Left colon (tissue), 2 donors: ENCODE measurements at regions of chrX and their contacts with region 1.

Region 1: DNA sequence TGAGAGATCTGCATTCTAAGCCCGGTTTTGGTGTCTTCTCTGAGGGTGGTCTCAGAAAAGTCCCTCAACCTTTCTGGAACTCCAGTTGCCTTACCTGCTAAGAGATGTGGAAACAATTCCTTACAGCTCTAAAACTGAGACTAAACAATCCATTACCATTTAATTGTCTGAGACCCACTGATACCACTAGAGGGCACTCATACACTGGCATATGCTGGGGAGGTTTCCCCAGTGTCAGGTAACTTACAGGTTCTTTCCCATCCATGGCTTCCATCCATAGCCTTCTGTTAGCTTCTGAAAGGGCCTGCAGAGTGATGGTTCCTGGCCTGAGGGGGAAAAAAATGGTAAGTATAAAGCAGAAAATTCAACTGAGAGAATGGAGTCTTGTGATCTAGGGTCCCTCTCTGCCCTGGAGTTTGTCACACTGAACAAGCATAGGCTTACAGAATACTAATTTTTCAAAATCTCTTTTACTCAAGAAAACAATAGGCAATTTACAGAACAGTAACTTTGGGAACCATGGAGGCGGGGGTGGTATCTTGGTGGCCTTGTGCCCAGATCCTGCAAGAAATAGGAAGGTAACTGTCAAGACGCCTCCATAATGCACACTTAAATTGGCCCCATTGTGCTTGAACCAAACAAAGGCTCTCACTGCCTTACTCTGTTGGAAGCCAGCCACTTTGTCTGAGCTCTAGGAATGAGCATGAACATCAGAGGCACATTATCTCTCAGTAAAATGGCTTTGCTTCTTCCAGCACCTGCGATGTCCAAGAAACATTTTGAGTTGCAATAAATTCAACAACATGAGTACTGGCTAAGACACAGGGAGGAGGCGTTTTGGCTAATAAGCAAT is 236.1 kb downstream of the OPHN1 start:
- DNase-seq: peak; percentile 16 to 23
- ATAC-seq: peak; percentile 89

Region 2: GRCh38 chrX:68462653-68463052 is 265.5 kb after region 1 on chrX:
- intact Hi-C with region 1: loop called in 1 of 2 experiments (anchors 5 kb)
- DNase-seq: no peak
- ATAC-seq: no peak